ENCODE measurements at regions of chr15 and their contacts with region 1.

Region 1: GRCh38 chr15:83753949-83754416 is 100.1 kb downstream of the ADAMTSL3 start:
- DNase-seq: no peak
- ATAC-seq: no peak
- H3K4me3 ChIP-seq: no peak overlapping the region
- H3K27ac ChIP-seq: no peak overlapping the region
- H3K4me1 ChIP-seq: no peaks in the 10 kb centered on the region
- H3K27me3 ChIP-seq: no peaks in the 10 kb centered on the region
- CTCF ChIP-seq: no peak
- POLR2A ChIP-seq: no peak
- RAD21 ChIP-seq: no peak

Region 2: GRCh38 chr15:83198476-83198875 is 555.5 kb before region 1 on chr15:
- CTCF ChIA-PET with region 1: no interaction called
- POLR2A ChIA-PET with region 1: no interaction called
- dilution Hi-C with region 1: no loop called
- in situ Hi-C with region 1: no loop called
- intact Hi-C with region 1: no loop called
- DNase-seq: no peak
- ATAC-seq: no peak
- H3K4me3 ChIP-seq: no peak overlapping the region
- H3K27ac ChIP-seq: no peak overlapping the region
- H3K4me1 ChIP-seq: peaks cover 2% of the 10 kb centered on the region; the same call in 1 of the 2 replicates
- H3K27me3 ChIP-seq: no peaks in the 10 kb centered on the region
- CTCF ChIP-seq: no peak
- POLR2A ChIP-seq: no peak
- RAD21 ChIP-seq: no peak

Region 3: GRCh38 chr15:83602021-83602420 is 152.0 kb before region 1 on chr15:
- CTCF ChIA-PET with region 1: no interaction called
- POLR2A ChIA-PET with region 1: no interaction called
- dilution Hi-C with region 1: no loop called
- in situ Hi-C with region 1: no loop called
- intact Hi-C with region 1: no loop called
- DNase-seq: no peak
- ATAC-seq: no peak
- H3K4me3 ChIP-seq: no peak overlapping the region
- H3K27ac ChIP-seq: no peak overlapping the region
- H3K4me1 ChIP-seq: no peaks in the 10 kb centered on the region; the same call in 1 of the 2 replicates
- H3K27me3 ChIP-seq: no peaks in the 10 kb centered on the region
- CTCF ChIP-seq: no peak
- POLR2A ChIP-seq: no peak
- RAD21 ChIP-seq: no peak

Region 4: DNA sequence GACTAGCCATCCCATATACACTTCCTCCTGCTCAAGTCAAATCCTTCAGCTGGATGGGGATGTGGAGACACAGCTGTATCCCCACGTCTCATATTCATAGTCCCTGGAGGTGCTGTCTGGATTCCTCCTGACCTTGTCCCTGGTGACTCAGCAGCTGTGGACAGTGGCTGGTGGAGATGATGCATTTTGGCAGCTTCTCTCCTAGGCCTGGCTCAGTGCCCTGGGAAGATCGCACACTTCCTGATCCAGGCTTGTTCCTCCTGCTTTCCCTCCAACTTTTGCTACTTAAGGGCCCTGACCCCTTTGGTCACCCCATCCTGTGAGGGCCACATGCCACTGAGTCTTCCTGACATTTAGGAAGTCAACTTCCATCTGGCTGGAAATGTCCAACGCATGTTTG is 55.7 kb before region 1 on chr15:
- CTCF ChIA-PET with region 1: no interaction called
- POLR2A ChIA-PET with region 1: no interaction called
- dilution Hi-C with region 1: no loop called
- in situ Hi-C with region 1: loop called (anchors 10 kb)
- intact Hi-C with region 1: no loop called
- DNase-seq: peak; percentile 42
- ATAC-seq: no peak
- H3K4me3 ChIP-seq: no peak overlapping the region
- H3K27ac ChIP-seq: no peak overlapping the region
- H3K4me1 ChIP-seq: peaks cover 3% of the 10 kb centered on the region; the same call in 1 of the 2 replicates
- H3K27me3 ChIP-seq: no peaks in the 10 kb centered on the region
- CTCF ChIP-seq: no peak
- POLR2A ChIP-seq: no peak
- RAD21 ChIP-seq: no peak

Region 5: DNA sequence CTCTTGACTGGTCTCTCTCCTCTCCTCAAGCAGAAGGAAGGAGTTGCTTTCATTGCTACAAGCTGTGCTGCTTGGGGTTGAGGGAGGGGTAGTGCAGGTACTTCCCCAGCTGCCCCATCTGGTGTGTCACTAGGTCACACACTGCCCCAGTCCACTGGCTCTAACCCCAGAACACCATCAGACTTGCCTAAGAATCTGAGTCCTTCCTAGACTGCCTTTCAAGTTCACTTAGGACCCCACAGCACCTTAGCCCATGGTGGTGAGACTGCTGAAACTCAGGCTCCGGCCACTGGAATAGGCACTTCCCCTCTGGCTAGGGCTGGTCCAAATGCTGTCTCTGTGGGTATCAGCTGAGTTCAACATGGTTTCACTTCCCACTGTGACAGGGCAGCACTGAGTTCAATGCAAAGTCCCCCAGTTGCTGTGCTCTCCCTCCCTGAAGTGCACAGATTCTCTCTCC is 201.9 kb after region 1 on chr15:
- CTCF ChIA-PET with region 1: no interaction called
- POLR2A ChIA-PET with region 1: no interaction called
- dilution Hi-C with region 1: no loop called
- in situ Hi-C with region 1: no loop called
- intact Hi-C with region 1: no loop called
- DNase-seq: no peak
- ATAC-seq: no peak
- H3K4me3 ChIP-seq: no peak overlapping the region
- H3K27ac ChIP-seq: no peak overlapping the region
- H3K4me1 ChIP-seq: no peaks in the 10 kb centered on the region
- H3K27me3 ChIP-seq: no peaks in the 10 kb centered on the region
- CTCF ChIP-seq: no peak
- POLR2A ChIP-seq: no peak
- RAD21 ChIP-seq: no peak

Measured in IMR-90 (cell line).